Activated CD4-positive, alpha-beta T cell treated with anti-CD3 and anti-CD28 coated beads for 36 hours (primary cell): ENCODE measurements at regions of chr10 and their contacts with region 1.

Region 1: DNA sequence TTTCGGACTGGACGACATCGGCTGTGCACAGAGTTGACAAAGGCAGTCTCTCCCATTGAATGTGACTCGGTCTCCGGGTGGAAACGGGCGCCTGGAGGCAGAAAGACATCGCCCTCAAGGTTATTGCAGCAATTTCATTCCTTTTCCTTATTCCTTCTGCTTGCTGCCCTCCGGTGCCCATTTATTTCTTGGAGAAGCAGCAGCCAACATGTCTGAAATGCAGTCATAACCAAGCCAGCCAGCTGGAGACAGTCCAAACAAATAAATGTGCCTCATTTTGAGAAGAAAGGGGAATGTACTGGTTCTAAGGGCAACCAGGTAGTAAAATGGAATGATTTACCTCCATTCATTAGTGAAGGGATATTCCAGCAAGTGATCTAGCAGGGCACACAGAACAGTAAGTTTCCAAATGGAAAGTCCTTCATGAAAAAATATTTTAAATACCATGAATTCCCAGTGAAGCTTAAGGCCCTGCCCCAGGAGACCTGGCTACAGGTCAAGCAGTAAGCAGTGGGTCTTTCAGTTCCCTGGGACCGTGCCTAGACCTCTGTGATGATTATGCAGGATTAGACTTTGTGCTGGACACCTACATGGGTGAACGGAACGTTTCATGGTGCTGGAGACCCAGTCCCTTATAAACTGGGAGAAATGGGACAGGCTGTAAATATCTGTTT is 86.6 kb downstream of the ABLIM1 start:
- DNase-seq: no peak
- ATAC-seq: no peak
- H3K4me3 Mint-ChIP-seq: no peak overlapping the region
- H3K27ac Mint-ChIP-seq: no peak overlapping the region
- H3K4me1 Mint-ChIP-seq: no peaks in the 10 kb centered on the region
- H3K27me3 Mint-ChIP-seq: no peaks in the 10 kb centered on the region

Region 2: GRCh38 chr10:113267619-113268562 is 1303.6 kb before region 1 on chr10:
- CTCF ChIA-PET with region 1: no interaction called
- POLR2A ChIA-PET with region 1: no interaction called
- intact Hi-C with region 1: no loop called
- DNase-seq: no peak
- ATAC-seq: no peak
- H3K4me3 Mint-ChIP-seq: no peak overlapping the region
- H3K27ac Mint-ChIP-seq: no peak overlapping the region
- H3K4me1 Mint-ChIP-seq: no peaks in the 10 kb centered on the region
- H3K27me3 Mint-ChIP-seq: peaks cover 8% of the 10 kb centered on the region

Region 3: GRCh38 chr10:114615600-114616007 is 44.2 kb after region 1 on chr10:
- CTCF ChIA-PET with region 1: no interaction called
- POLR2A ChIA-PET with region 1: no interaction called
- intact Hi-C with region 1: no loop called
- DNase-seq: peak; percentile 31
- ATAC-seq: peak; percentile 88
- H3K4me3 Mint-ChIP-seq: no peak overlapping the region
- H3K27ac Mint-ChIP-seq: no peak overlapping the region
- H3K4me1 Mint-ChIP-seq: peaks cover 8% of the 10 kb centered on the region
- H3K27me3 Mint-ChIP-seq: peaks cover 2% of the 10 kb centered on the region

Region 4: GRCh38 chr10:114730291-114730690 is 158.8 kb after region 1 on chr10:
- CTCF ChIA-PET with region 1: no interaction called
- POLR2A ChIA-PET with region 1: interaction called, 10 read pairs
- intact Hi-C with region 1: no loop called
- DNase-seq: no peak
- ATAC-seq: no peak
- H3K4me3 Mint-ChIP-seq: no peak overlapping the region
- H3K27ac Mint-ChIP-seq: no peak overlapping the region
- H3K4me1 Mint-ChIP-seq: no peaks in the 10 kb centered on the region
- H3K27me3 Mint-ChIP-seq: no peaks in the 10 kb centered on the region